HEK293 (cell line): ENCODE measurements at regions of chr5 and their contacts with region 1.

Region 1: GRCh38 chr5:168268949-168269943 is 22.2 kb upstream of the WWC1 start:
- H3K4me3 ChIP-seq: peak overlapping the region; percentile 26
- H3K27ac ChIP-seq: no peak overlapping the region; the same call in 1 of the 2 replicates
- H3K4me1 ChIP-seq: peaks cover 6% of the 10 kb centered on the region
- CTCF ChIP-seq: peak; percentile 96

Region 2: DNA sequence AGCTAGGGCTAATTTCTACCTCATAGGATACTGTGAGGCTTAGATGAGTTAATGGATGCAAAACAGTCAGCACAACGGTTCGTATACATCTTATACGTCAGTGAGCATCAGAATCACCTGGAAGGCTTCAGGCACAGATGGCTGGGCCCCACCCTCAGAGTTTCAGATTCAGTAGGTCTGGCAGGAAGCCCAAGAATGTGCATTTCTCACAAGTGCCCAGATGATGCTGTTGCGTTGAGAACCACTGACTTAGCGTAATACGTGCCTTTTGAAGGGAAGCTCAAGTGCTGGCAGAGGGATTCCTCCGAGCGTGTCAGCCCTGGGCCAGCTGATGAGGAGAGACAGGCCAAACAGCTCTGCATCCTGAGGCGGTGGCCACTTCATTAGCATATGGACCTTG is 94.9 kb before region 1 on chr5:
- CTCF ChIA-PET with region 1: no interaction called
- POLR2A ChIA-PET with region 1: no interaction called
- H3K4me3 ChIP-seq: no peak overlapping the region
- H3K27ac ChIP-seq: no peak overlapping the region
- H3K4me1 ChIP-seq: no peaks in the 10 kb centered on the region
- CTCF ChIP-seq: no peak

Region 3: DNA sequence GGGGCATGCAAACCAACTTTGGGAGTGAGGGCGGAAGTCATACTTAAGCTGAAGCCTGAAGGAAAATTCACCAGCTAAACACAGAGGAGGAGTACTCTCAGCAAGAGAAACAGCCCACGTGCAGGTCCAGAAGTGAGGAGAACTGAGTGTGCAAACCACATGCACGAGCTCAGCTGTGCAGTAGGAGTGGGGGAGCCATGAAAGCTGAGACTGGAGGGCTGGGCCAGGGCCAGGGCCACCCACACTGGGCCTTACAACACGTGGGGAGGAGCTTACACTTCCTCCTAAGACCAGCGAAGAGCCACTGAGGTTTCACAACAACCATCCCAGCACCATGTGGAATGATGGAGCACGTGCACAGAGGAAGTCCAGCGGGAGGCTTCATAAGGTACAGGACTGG is 12.9 kb after region 1 on chr5:
- CTCF ChIA-PET with region 1: interaction called, 11 read pairs
- POLR2A ChIA-PET with region 1: no interaction called
- H3K4me3 ChIP-seq: no peak overlapping the region
- H3K27ac ChIP-seq: no peak overlapping the region
- H3K4me1 ChIP-seq: no peaks in the 10 kb centered on the region
- CTCF ChIP-seq: no peak

Region 4: DNA sequence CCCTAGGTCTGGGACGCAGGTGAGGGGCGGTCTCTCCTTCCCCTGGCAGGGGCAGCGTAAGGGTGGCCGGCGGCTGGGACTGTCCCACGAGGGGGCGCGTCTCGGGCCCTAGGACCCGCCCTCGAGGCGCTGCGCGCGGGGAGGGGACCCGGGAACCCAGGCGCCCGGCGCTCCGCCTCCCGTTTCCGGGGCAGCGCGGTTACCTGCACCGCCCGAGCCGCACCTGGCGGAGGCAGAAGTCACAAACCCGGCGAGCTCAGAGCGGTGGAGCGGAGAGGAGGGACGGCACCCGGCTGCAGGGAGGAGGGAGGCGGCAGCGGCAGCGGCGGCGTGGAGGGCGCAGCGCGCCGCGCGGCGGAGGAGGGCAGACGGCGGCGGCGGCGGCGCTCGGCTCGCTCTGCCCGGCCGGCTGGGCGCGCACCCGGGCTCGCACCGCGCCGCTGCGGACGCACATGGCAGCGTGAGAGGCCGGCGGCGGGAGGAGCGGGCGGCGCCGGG is 22.3 kb after region 1 on chr5 and contains the start of gene WWC1:
- CTCF ChIA-PET with region 1: interaction called, 10 read pairs
- POLR2A ChIA-PET with region 1: interaction called, 8 read pairs
- H3K4me3 ChIP-seq: peak within 1 kb of the TSS; percentile 66
- H3K27ac ChIP-seq: peak within 1 kb of the TSS; percentile 64; the same call in 1 of the 2 replicates
- H3K4me1 ChIP-seq: peaks cover 3% of the 10 kb centered on the region; the same call in 1 of the 2 replicates
- CTCF ChIP-seq: peak; percentile 85

Region 5: DNA sequence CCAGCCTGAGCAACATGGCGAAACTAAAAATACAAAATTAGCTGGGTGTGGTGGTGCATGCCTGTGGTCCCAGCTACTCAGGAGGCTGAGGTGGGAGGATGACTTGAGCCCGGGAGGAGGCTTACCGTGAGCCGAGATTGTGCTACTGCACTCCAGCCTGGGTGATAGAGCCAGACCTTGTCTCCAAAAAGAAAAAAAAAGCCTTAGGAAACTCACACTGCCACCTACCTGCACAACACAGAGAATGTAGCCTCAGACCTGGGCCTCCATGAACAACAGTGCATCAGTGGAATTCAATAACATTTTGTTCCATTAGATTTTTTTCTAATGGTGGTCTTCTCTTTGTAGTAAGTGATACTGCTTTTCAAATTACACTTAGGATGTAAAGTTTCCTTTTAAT is 153.2 kb after region 1 on chr5:
- CTCF ChIA-PET with region 1: interaction called, 13 read pairs
- POLR2A ChIA-PET with region 1: interaction called, 3 read pairs
- H3K4me3 ChIP-seq: no peak overlapping the region
- H3K27ac ChIP-seq: no peak overlapping the region
- H3K4me1 ChIP-seq: no peaks in the 10 kb centered on the region
- CTCF ChIP-seq: no peak

Region 6: GRCh38 chr5:168486136-168486879 is 217.1 kb after region 1 on chr5 and contains the start of gene RARS1:
- CTCF ChIA-PET with region 1: interaction called, 17 read pairs
- POLR2A ChIA-PET with region 1: interaction called, 3 read pairs
- H3K4me3 ChIP-seq: peak within 1 kb of the TSS; percentile 94
- H3K27ac ChIP-seq: peak within 1 kb of the TSS; percentile 8; the same call in 1 of the 2 replicates
- H3K4me1 ChIP-seq: no peaks in the 10 kb centered on the region
- CTCF ChIP-seq: peak; percentile 98